Psoas muscle (tissue), 8 donors: ENCODE measurements at regions of chr1 and their contacts with region 1.

Region 1: DNA sequence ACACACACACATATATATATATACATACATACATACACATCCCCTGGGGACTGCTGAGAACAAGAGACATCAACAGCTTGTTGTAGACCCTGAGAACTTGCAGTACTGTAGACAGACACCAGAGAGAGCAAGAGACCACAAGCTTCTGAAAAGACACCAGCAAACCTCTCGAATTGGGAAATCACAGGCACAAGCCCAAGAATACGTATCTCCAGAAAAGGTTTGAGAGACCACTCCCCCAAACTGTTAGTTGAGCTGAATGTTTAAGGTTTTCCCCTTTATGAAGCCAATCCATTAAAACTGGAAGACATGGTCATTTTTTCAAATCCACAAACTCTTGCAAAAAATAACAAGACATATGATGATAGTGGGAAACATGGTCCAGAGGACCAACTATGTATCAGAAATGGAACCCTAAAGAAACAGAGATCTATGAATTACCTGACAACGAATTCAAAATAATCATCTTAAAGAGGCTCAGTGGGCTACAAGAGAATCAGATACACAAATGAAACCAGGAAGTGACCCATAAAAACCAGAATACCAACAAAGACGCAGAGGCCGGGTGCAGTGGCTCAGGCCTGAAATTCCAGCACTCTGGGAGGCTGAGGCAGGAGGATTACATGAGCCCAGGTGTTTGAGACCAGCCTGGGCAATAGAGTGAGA is 45.1 kb downstream of the SLC2A1 start:
- DNase-seq: no peak
- ATAC-seq: peak in 3 of 4 donors; percentile 54 to 74 (median 69)
- H3K4me3 ChIP-seq: no peak overlapping the region
- H3K27ac ChIP-seq: no peak overlapping the region
- H3K4me1 ChIP-seq: no peaks in the 10 kb centered on the region
- H3K27me3 ChIP-seq: no peaks in the 10 kb centered on the region
- CTCF ChIP-seq: peak; percentile 70

Region 2: DNA sequence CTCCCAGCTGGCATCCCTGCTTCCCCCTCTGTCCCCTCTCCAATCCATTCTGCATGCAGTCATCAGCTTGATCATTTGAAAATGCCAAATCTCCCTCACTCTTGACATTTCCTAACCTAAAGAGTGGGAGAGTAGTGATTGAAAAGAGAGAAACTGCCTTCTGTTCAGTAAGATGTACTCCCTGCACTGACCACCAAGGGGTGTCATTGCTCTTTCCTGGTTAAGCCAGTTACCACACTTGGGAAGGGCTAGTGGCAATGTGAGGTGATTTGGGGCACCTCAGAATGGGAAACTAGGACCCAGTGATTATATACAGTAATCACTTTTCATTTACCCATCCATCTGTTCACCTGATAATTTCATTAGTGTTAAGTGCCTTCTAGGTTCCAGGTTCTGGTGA is 135.7 kb before region 1 on chr1:
- intact Hi-C with region 1: loop called in 1 of 2 experiments (anchors 10 kb)
- DNase-seq: no peak
- ATAC-seq: peak in 2 of 4 donors; percentile 63 to 71
- H3K4me3 ChIP-seq: no peak overlapping the region
- H3K27ac ChIP-seq: no peak overlapping the region
- H3K4me1 ChIP-seq: no peaks in the 10 kb centered on the region
- H3K27me3 ChIP-seq: no peaks in the 10 kb centered on the region
- CTCF ChIP-seq: peak; percentile 59

Region 3: DNA sequence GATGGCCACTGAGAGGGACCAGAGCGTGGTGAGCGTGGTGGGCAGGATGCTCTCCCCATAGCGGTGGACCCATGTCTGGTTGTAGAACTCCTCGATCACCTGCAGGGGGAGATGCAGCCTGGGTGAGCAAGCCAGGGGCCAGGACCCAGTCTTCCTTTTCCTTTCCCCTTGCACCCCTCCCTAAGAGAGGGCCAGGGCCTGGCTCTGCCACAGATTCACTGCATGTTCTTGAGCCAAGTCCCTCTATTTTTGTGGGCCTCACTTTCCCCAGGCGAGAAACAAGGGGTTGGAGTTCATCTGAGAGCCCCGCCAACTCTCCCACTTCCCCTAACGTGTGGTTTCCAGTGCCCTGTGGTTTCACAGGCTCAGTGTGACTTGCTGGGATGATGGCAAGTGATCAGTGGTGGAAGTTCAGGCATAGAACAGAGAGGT is 17.6 kb after region 1 on chr1:
- intact Hi-C with region 1: no loop called
- DNase-seq: no peak
- ATAC-seq: peak in 1 of 4 donors; percentile 30
- H3K4me3 ChIP-seq: no peak overlapping the region
- H3K27ac ChIP-seq: no peak overlapping the region
- H3K4me1 ChIP-seq: no peaks in the 10 kb centered on the region
- H3K27me3 ChIP-seq: no peaks in the 10 kb centered on the region
- CTCF ChIP-seq: peak; percentile 20

Region 4: GRCh38 chr1:43137445-43138052 is 224.0 kb after region 1 on chr1:
- intact Hi-C with region 1: no loop called
- DNase-seq: no peak
- ATAC-seq: no peak
- H3K4me3 ChIP-seq: no peak overlapping the region
- H3K27ac ChIP-seq: no peak overlapping the region
- H3K4me1 ChIP-seq: no peaks in the 10 kb centered on the region
- H3K27me3 ChIP-seq: peaks cover 0 to 3% (median 3%) of the 10 kb centered on the region in 3 donors
- CTCF ChIP-seq: no peak

Region 5: GRCh38 chr1:43152866-43153265 is 239.3 kb after region 1 on chr1:
- intact Hi-C with region 1: no loop called
- DNase-seq: no peak
- ATAC-seq: no peak
- H3K4me3 ChIP-seq: no peak overlapping the region
- H3K27ac ChIP-seq: no peak overlapping the region
- H3K4me1 ChIP-seq: no peaks in the 10 kb centered on the region
- H3K27me3 ChIP-seq: peaks cover 0 to 32% (median 5%) of the 10 kb centered on the region in 3 donors
- CTCF ChIP-seq: no peak